ENCODE measurements at regions of chr2 and their contacts with region 1.

Region 1: GRCh38 chr2:30060562-30060961 is 86.2 kb upstream of the YPEL5 start:
- DNase-seq: no peak
- CTCF ChIP-seq: no peak

Region 2: GRCh38 chr2:30072250-30072842 is 11.8 kb after region 1 on chr2:
- CTCF ChIA-PET with region 1: interaction called, 11 read pairs
- POLR2A ChIA-PET with region 1: no interaction called
- DNase-seq: peak; percentile 71
- CTCF ChIP-seq: peak; percentile 74

Region 3: GRCh38 chr2:30098266-30099005 is 37.9 kb after region 1 on chr2:
- CTCF ChIA-PET with region 1: no interaction called
- POLR2A ChIA-PET with region 1: no interaction called
- DNase-seq: no peak
- CTCF ChIP-seq: no peak

Measured in GM10248 (cell line).